Activated CD8-positive, alpha-beta T cell treated with anti-CD3 and anti-CD28 coated beads, Interleukin-2, amount 10 ng/mL, durations not matched to agents 7 days and 5 days (primary cell): ENCODE measurements at regions of chr1 and their contacts with region 1.

Region 1: DNA sequence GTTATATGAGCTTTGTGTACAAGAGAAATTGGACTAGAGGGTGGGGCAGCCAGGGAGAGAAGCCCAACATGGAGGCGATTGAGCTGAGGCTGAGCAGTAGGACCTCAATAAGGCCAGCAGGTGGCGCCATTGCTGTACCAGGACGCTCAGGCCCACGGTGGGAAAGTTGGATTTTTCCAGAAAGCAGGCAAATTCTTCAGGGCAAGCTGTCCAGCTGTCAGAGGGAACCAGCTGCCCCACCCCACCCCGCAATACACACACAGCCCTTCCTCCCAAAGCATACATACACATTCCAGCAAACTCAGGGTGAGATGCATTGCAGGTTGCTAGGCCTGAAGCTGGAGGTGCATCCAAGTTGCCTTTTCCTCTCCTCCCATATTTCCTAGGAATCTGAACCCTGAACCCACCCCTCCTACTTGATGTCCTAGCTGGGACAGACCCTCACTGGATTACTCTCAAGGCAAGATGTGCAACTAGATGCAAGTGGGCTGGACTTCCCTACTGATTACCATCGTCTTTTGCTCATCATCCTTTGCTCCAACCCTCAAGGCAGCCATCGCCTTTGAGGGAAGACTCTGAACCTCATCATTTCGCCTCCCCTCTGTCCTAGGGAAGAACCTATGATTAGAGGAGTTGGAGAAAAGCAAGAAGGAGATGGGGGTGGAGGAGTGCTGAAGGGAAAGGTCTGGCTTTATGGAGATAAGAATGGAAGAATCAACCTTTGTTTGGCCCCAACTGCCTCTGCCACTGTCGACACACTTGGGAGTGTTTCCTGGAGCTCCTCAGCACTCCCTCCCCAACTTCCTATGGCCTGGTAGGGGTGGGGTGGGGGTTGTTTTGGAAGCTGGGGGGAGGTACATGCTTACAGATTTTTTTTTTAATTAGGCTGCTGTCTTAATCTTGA is 25.5 kb downstream of the CD34 start:
- DNase-seq: peak; percentile 84
- ATAC-seq: peak; percentile 66
- H3K4me3 Mint-ChIP-seq: no peak overlapping the region
- H3K27ac Mint-ChIP-seq: peak overlapping the region; percentile 18
- H3K4me1 Mint-ChIP-seq: peaks cover 34% of the 10 kb centered on the region
- H3K27me3 Mint-ChIP-seq: peaks cover 2% of the 10 kb centered on the region

Region 2: DNA sequence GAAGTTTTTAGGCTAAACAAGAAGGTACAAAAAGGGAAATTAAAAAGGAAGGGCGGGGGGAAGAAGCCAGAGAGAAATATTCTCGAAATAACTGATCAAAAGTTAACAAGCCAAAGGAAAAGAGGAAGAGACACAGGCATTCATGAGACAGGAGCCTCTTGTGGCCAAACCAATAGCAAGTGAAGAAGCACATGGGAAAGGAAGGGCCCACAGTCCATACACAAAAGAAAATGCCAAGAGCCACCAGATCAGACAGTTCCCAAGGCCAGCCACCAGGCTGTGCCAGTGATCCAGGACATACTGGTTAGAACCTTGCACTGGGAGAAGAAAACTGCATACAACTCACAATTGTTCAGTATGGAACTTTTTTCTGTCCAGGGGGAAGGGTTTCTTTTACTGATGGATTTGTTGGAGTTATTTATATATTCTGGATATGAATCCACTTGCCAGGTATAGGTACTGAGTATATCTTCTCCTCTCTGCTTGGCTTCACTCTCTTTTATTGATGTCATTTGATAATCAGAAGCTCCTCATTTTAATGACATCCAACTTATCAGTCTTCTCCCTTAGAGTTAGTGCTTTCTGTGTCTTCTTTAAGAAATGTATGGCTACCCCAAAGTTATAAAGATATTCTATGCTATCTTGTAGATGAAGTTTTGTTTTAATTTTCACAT is 56.8 kb before region 1 on chr1:
- CTCF ChIA-PET with region 1: interaction called, 98 read pairs
- POLR2A ChIA-PET with region 1: interaction called, 6 read pairs
- DNase-seq: peak; percentile 64
- ATAC-seq: no peak
- H3K4me3 Mint-ChIP-seq: no peak overlapping the region
- H3K27ac Mint-ChIP-seq: no peak overlapping the region
- H3K4me1 Mint-ChIP-seq: peaks cover 86% of the 10 kb centered on the region
- H3K27me3 Mint-ChIP-seq: no peaks in the 10 kb centered on the region

Region 3: DNA sequence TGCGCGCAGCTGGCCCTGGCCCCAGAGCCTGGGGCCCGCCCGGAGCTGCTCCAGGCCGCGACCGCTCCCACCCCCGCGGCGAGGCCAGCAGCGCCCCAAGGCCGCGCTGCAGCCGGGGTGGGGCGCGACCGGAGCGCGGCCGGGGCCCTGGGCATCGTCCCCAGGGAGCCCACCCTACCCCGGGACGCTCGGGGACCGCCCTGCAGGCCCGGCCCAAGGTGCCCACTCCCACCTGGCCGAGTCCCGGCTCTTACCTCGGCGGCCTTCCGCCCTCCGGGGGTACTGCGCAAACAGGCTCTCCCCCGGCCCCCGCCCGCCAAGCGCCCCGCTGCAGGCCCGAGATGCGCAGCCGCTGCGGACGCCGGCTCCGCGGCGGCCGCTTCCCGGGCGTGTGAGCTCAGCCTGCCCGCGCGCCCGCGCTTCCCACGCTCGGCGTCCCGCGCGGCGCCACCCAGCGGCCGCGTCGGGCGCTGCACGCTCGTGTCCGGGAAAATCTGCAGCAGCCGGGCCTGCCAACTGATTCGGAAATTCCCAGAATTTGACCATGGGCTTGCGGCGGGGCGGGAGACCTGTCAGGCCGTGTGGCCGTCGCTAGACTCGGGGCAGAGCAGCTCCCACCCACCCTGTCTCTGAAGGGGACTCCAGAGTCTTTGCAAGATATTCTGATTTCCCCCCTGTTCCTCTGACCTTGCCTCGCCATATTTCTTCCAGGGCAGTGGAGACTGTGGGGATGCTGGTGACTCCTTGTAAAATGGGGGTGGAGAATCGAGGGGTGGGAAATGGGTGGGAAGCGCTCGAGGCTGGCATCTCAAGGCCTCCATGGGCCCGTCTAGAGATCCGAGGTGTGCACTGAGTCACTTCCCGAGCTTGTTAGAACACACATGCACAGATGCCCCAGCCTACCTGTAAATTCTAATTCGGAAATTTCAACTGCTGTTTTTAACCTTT is 16.3 kb before region 1 on chr1:
- CTCF ChIA-PET with region 1: interaction called, 386 read pairs
- POLR2A ChIA-PET with region 1: interaction called, 20 read pairs
- DNase-seq: peak; percentile 70
- ATAC-seq: peak; percentile 69
- H3K4me3 Mint-ChIP-seq: peak overlapping the region; percentile 93
- H3K27ac Mint-ChIP-seq: peak overlapping the region; percentile 86
- H3K4me1 Mint-ChIP-seq: peaks cover 77% of the 10 kb centered on the region
- H3K27me3 Mint-ChIP-seq: no peaks in the 10 kb centered on the region

Region 4: GRCh38 chr1:207897188-207897587 is 11.8 kb after region 1 on chr1:
- CTCF ChIA-PET with region 1: interaction called, 90 read pairs
- POLR2A ChIA-PET with region 1: no interaction called
- DNase-seq: no peak
- ATAC-seq: no peak
- H3K4me3 Mint-ChIP-seq: no peak overlapping the region
- H3K27ac Mint-ChIP-seq: no peak overlapping the region
- H3K4me1 Mint-ChIP-seq: peaks cover 14% of the 10 kb centered on the region
- H3K27me3 Mint-ChIP-seq: peaks cover 15% of the 10 kb centered on the region

Region 5: GRCh38 chr1:207908107-207908734 is 22.8 kb after region 1 on chr1:
- CTCF ChIA-PET with region 1: interaction called, 14 read pairs
- POLR2A ChIA-PET with region 1: no interaction called
- DNase-seq: no peak
- ATAC-seq: no peak
- H3K4me3 Mint-ChIP-seq: no peak overlapping the region
- H3K27ac Mint-ChIP-seq: no peak overlapping the region
- H3K4me1 Mint-ChIP-seq: peaks cover 30% of the 10 kb centered on the region
- H3K27me3 Mint-ChIP-seq: peaks cover 52% of the 10 kb centered on the region

Region 6: GRCh38 chr1:207941665-207942064 is 56.3 kb after region 1 on chr1:
- CTCF ChIA-PET with region 1: interaction called, 26 read pairs
- POLR2A ChIA-PET with region 1: no interaction called
- DNase-seq: no peak
- ATAC-seq: no peak
- H3K4me3 Mint-ChIP-seq: no peak overlapping the region
- H3K27ac Mint-ChIP-seq: no peak overlapping the region
- H3K4me1 Mint-ChIP-seq: no peaks in the 10 kb centered on the region
- H3K27me3 Mint-ChIP-seq: peaks cover 31% of the 10 kb centered on the region

Region 7: GRCh38 chr1:207997486-207998268 is 112.3 kb after region 1 on chr1:
- CTCF ChIA-PET with region 1: interaction called, 34 read pairs
- POLR2A ChIA-PET with region 1: no interaction called
- DNase-seq: peak; percentile 65
- ATAC-seq: peak; percentile 90
- H3K4me3 Mint-ChIP-seq: no peak overlapping the region
- H3K27ac Mint-ChIP-seq: no peak overlapping the region
- H3K4me1 Mint-ChIP-seq: no peaks in the 10 kb centered on the region
- H3K27me3 Mint-ChIP-seq: peaks cover 17% of the 10 kb centered on the region

Region 8: DNA sequence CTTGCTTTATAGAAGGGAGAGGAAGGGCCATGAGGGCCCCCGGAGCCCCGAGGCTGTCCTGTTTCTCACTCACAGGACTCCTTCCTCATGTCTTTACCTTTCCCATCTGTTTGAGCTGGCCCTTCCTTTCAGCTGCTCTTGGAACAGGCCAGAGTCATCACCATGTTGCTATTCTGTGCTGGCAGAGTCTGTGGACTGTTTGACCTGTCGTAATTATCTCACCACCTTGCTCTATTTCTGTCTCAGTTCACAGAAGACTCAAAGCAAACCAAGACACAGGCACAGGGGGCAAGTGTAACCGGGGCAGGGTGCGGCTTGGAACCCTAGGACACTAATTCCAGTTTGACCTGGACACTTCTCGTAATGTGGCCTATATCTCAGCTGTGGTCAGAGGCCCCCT is 129.9 kb after region 1 on chr1:
- CTCF ChIA-PET with region 1: no interaction called
- POLR2A ChIA-PET with region 1: no interaction called
- DNase-seq: no peak
- ATAC-seq: no peak
- H3K4me3 Mint-ChIP-seq: no peak overlapping the region
- H3K27ac Mint-ChIP-seq: no peak overlapping the region
- H3K4me1 Mint-ChIP-seq: no peaks in the 10 kb centered on the region
- H3K27me3 Mint-ChIP-seq: peaks cover 7% of the 10 kb centered on the region